ENCODE measurements at regions of chr16 and their contacts with region 1.

Region 1: DNA sequence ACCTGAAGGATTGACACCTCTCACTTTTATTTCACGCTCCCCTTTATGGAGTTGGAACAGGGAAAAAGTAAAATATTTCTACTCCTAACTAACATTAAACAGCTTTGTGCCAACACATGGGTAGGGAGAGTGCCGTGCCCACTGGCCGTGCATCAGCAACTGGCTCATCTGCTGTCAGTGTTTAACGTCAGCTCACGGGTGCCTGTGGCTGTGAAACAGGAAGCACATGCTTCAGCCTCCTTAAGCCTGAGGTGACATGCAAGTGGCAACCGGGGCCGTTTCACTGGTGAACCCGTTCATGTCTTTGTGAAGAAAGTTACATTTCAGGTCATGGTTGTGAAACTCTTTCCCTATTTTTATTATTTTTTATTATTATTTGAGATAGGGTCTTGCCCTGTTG is 3.2 kb downstream of the SPG7 start:
- DNase-seq: peak in 1 of 35 experiments; percentile 5
- ATAC-seq: no peak
- H3K4me3 ChIP-seq: no peak overlapping the region
- H3K4me3 Mint-ChIP-seq: peak overlapping the region in 1 of 3 donors; percentile 17
- H3K27ac ChIP-seq: no peak overlapping the region
- H3K27ac Mint-ChIP-seq: no peak overlapping the region
- H3K4me1 ChIP-seq: peaks cover 14 to 29% of the 10 kb centered on the region in 2 experiments
- H3K4me1 Mint-ChIP-seq: peaks cover 7 to 23% (median 14%) of the 10 kb centered on the region in 3 donors
- H3K27me3 ChIP-seq: no peaks in the 10 kb centered on the region
- H3K27me3 Mint-ChIP-seq: no peaks in the 10 kb centered on the region

Region 2: DNA sequence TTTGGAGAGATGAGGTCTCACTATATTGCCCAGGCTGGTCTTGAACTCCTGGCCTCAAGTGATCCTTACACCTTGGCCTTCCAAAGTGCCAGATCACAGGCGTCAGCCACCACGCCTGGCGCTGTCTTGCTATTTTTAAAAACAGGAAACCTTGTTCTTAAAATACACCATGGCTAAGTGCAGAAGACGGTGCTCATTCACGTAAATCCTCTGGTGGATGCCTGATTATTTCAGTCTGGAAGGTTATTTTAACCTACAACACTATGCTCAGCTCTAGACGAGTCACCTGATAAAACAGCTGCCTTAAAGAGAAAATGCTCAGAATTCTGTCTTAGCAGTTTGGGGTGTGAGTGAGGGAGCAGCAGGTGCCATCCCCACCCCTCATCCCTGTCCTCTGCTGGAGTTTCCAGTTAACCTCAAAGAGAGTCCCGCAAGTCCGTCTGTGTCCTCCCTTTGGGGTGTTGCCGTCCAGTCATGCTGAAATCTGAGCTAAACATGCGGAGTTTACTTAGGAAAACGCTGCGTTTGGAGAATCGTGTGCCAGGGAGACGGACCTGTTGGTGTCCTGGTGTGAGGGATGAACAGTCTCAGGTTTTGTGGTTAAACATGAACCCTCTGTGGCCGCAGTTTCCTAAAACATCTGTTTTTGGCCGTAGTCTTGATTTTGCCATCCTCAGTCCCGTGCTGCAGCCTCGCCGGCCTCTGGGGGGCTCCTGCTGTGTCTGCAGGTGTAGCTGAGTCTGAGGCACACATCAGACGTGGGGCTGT is 14.0 kb after region 1 on chr16:
- CTCF ChIA-PET with region 1: interaction called in 1 of 2 experiments, 10 read pairs
- POLR2A ChIA-PET with region 1: interaction called in 1 of 2 experiments, 3 read pairs
- DNase-seq: no peak
- ATAC-seq: no peak
- H3K4me3 ChIP-seq: no peak overlapping the region
- H3K4me3 Mint-ChIP-seq: no peak overlapping the region
- H3K27ac ChIP-seq: no peak overlapping the region
- H3K27ac Mint-ChIP-seq: no peak overlapping the region
- H3K4me1 ChIP-seq: no peaks in the 10 kb centered on the region
- H3K4me1 Mint-ChIP-seq: peaks cover 0 to 2% (median 0%) of the 10 kb centered on the region in 3 donors
- H3K27me3 ChIP-seq: no peaks in the 10 kb centered on the region
- H3K27me3 Mint-ChIP-seq: no peaks in the 10 kb centered on the region